ENCODE measurements at regions of chr19 and their contacts with region 1.

Region 1: GRCh38 chr19:46821498-46822409 is 28.9 kb downstream of the AP2S1 start:
- DNase-seq: peak; percentile 82
- H3K4me3 Mint-ChIP-seq: no peak overlapping the region
- H3K27ac Mint-ChIP-seq: peak overlapping the region; percentile 26
- H3K4me1 Mint-ChIP-seq: peaks cover 29% of the 10 kb centered on the region
- H3K27me3 Mint-ChIP-seq: no peaks in the 10 kb centered on the region

Region 2: GRCh38 chr19:46759817-46760333 is 61.9 kb before region 1 on chr19:
- CTCF ChIA-PET with region 1: interaction called, 10 read pairs
- intact Hi-C with region 1: no loop called
- DNase-seq: no peak
- H3K4me3 Mint-ChIP-seq: no peak overlapping the region
- H3K27ac Mint-ChIP-seq: no peak overlapping the region
- H3K4me1 Mint-ChIP-seq: no peaks in the 10 kb centered on the region
- H3K27me3 Mint-ChIP-seq: no peaks in the 10 kb centered on the region

Measured in activated naive CD4-positive, alpha-beta T cell treated with anti-CD3 and anti-CD28 coated beads for 36 hours (primary cell).